MCF 10A (cell line): ENCODE measurements at regions of chr6 and their contacts with region 1.

Region 1: DNA sequence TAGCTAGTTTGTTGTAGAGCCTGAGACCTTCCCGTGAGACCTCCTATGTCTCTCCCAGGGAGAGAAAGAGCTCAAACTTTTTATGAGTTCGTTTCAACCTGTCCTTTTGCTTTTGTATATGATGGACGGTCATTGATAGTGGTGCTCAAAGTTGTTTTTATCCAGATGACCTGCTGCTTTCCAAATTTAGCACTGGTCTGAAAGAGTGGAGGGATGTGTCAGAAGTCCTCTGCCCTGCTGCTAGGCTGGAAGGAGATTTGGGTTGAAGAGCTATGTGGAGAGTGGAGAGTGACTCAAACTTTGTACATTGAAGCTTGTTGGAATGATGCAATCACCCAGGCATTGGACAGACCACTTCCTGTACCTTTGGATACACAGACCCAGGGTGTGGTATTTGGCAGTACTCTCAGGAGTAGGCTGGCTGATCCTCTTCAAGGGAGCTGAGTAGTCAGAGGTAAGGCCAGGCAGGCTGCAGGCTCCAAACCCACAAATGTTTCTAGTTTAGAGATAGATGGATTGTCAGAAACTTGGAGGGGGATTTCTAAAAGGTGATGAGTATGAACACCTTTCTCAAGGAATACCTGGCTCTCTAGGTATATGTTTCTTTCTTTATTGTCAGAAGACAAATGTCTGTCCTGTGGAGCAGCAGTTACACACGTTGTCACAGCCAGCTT is 49.4 kb upstream of the RREB1 start:
- DNase-seq: peak; percentile 99
- H3K4me3 Mint-ChIP-seq: peak overlapping the region; percentile 44
- H3K27ac Mint-ChIP-seq: peak overlapping the region; percentile 91
- H3K4me1 Mint-ChIP-seq: peaks cover 30% of the 10 kb centered on the region
- H3K27me3 Mint-ChIP-seq: no peaks in the 10 kb centered on the region
- CTCF ChIP-seq: no peak

Region 2: DNA sequence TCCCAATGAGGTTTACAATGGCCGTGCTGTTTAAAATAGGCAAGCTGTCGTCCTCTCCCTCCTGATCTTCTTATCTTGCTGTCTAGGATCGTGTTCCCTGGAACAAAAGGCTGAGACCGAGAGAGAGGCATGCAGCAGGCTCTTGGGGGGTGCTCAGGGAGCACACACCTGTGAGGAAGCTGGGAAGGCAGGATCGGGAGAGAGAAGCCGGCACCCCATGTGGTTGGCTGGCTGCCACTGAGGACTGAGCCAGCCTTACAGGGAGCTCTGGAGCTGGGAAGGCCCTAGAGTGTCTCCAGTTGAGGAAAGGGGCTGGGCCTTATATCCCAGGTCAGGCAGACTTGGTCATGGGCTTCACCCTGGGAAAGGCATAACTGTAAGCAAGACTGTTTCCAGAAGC is 285.6 kb before region 1 on chr6:
- CTCF ChIA-PET with region 1: no interaction called
- POLR2A ChIA-PET with region 1: no interaction called
- intact Hi-C with region 1: no loop called
- DNase-seq: no peak
- H3K4me3 Mint-ChIP-seq: no peak overlapping the region
- H3K27ac Mint-ChIP-seq: no peak overlapping the region
- H3K4me1 Mint-ChIP-seq: no peaks in the 10 kb centered on the region
- H3K27me3 Mint-ChIP-seq: no peaks in the 10 kb centered on the region
- CTCF ChIP-seq: no peak

Region 3: DNA sequence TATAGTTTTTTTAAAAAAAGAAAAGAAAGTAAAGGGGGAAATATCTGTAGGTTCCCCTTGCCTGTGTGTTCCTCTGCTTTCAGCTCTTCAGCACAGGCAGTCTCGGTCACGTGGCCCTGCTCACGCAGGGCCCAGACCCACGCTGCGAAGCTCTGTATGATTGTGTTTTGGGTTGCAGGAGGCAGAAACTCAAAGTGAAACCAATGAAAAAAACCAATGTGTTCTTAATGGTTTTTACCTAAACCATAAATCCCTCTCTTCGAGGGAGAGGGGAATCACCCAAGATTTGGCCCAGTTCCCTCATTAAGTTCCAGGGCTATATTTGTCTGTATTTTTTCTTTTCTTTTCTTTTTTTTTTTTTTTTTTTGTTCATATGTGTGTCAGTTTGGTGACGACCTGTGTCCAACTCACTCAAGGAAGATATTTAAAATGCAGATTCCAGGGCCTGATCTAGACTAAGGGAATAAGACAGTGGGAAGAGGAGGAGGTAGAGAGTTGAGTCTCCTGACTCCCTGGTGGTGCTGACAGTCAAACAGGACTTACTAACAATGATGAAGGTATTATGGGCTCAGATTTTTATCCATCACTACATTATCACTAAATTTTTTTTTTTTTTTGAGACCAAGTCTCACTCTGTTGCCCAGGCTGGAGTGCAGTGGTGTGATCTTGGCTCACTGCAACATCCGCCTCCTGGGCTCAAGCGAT is 15.6 kb after region 1 on chr6:
- CTCF ChIA-PET with region 1: no interaction called
- POLR2A ChIA-PET with region 1: interaction called, 16 read pairs
- intact Hi-C with region 1: no loop called
- DNase-seq: no peak
- H3K4me3 Mint-ChIP-seq: no peak overlapping the region
- H3K27ac Mint-ChIP-seq: no peak overlapping the region
- H3K4me1 Mint-ChIP-seq: no peaks in the 10 kb centered on the region
- H3K27me3 Mint-ChIP-seq: no peaks in the 10 kb centered on the region
- CTCF ChIP-seq: no peak